ENCODE measurements at regions of chr12 and their contacts with region 1.

Region 1: GRCh38 chr12:3299929-3300832 is 190.8 kb upstream of the PRMT8 start:
- DNase-seq: peak; percentile 93
- ATAC-seq: peak; percentile 85
- H3K4me3 ChIP-seq: peak overlapping the region; percentile 34
- H3K27ac ChIP-seq: no peak overlapping the region
- H3K4me1 ChIP-seq: peaks cover 6% of the 10 kb centered on the region
- H3K27me3 ChIP-seq: peaks cover 10% of the 10 kb centered on the region
- CTCF ChIP-seq: peak; percentile 93

Region 2: DNA sequence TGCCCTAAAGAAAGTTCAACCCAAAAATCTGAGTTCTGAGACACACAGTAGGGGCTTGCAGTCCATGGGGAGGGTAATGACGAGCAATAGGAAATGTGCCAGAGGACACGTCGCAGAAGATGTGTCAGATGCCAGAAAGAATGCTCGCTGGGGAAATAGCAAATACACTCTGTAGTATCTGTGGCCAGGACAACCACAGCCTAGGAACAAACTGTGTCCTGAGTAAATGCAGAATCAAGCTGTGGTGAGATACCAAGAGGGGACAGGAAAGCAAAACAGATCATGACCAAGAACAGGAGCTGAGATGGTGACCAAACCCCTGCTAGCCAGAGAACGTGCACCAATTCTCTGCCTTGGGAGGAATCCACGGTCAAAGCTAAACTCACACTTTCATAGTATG is 443.6 kb after region 1 on chr12:
- intact Hi-C with region 1: no loop called
- DNase-seq: no peak
- ATAC-seq: no peak
- H3K4me3 ChIP-seq: no peak overlapping the region
- H3K27ac ChIP-seq: no peak overlapping the region
- H3K4me1 ChIP-seq: no peaks in the 10 kb centered on the region
- H3K27me3 ChIP-seq: no peaks in the 10 kb centered on the region
- CTCF ChIP-seq: no peak

Region 3: GRCh38 chr12:3797531-3798049 is 497.4 kb after region 1 on chr12:
- intact Hi-C with region 1: loop called (anchors 10 kb)
- DNase-seq: no peak
- ATAC-seq: peak; percentile 65
- H3K4me3 ChIP-seq: no peak overlapping the region
- H3K27ac ChIP-seq: no peak overlapping the region
- H3K4me1 ChIP-seq: no peaks in the 10 kb centered on the region
- H3K27me3 ChIP-seq: no peaks in the 10 kb centered on the region
- CTCF ChIP-seq: no peak

Region 4: GRCh38 chr12:4987076-4987760 is 1687.0 kb after region 1 on chr12:
- intact Hi-C with region 1: no loop called
- DNase-seq: no peak
- ATAC-seq: no peak
- H3K4me3 ChIP-seq: no peak overlapping the region
- H3K27ac ChIP-seq: no peak overlapping the region
- H3K4me1 ChIP-seq: no peaks in the 10 kb centered on the region
- H3K27me3 ChIP-seq: peaks cover 42% of the 10 kb centered on the region
- CTCF ChIP-seq: no peak

Measured in upper lobe of right lung (tissue), 1 donor.